ENCODE measurements at regions of chr6 and their contacts with region 1.

Region 1: GRCh38 chr6:28252009-28252975 is at the start of gene ZKSCAN4:
- DNase-seq: peak; percentile 63 to 93 (median 82)

Region 2: DNA sequence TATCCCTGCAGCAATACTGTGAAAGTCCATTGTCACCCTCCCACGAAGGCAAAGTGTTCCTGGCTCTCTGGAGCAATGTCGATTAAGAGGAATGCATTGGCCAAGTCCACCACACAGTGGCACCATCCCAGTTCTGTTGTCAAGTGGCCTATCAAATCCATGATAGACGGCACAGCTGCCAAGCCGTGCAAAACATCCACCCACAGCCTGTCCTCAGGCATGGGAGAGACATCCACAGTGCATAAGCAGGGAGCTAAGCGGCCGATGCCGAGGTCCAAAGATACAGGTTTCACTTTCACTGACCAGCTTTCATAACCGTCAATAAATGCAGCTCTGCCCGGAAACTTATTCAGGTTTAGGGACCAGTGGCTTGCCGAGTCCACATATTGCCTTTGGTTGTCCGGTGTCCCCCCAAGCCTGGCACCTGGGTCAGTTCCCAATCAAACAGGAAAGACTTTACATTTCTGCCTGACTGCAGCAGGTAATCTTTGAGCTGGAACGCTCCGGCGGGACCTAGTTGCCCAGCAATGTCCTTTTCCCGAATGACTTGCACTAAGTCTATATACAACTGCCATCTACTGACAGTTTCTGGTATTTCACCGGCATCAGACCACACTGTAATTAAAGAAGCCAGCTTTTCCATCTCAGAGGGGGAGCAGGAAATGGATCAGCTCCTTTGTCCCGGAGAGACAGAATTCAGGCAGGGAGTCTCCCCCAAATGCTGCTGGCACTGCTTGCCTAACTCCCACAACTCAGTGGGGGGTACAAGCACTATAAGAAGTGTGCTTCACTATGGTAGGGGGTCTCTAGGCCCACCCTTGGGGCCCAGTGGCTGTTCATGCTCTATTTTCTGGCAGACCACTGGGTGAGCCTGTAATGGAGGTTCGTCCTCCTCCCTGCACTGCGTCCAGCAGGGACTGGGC is 103.7 kb after region 1 on chr6:
- intact Hi-C with region 1: loop called (anchors 10 kb)
- DNase-seq: peak; percentile 51 to 93 (median 75)

Measured in head of caudate nucleus (tissue), 42 donors.